Posterior cingulate gyrus (tissue), 11 donors: ENCODE measurements at regions of chr7 and their contacts with region 1.

Region 1: GRCh38 chr7:79452032-79452494 is 1.4 kb downstream of the MAGI2 start:
- DNase-seq: peak; percentile 82 to 98 (median 92)

Region 2: DNA sequence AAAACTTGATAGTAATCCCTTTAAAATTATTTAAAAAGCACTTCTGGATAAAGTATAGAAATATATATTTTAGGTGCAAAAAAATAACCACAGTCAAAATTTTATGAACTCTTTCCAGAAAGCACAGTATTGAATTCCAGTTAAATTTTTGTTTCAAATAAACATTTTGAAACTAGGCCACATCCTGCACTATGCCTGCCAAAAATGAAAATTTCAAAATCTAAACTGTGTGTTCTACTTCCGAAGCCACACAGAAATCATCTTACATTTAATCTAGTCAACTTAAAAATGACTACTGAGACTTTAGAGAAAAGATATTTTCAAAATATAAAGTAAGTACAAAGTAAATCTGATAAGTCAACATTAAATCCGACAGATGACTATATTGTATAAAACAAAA is 48.6 kb before region 1 on chr7:
- intact Hi-C with region 1: loop called (anchors 10 kb)
- DNase-seq: no peak

Region 3: GRCh38 chr7:79647711-79648110 is 195.6 kb after region 1 on chr7:
- intact Hi-C with region 1: no loop called
- DNase-seq: peak in 2 of 10 donors; percentile 47 to 60